K562 (cell line): ENCODE measurements at regions of chr1 and their contacts with region 1.

Region 1: DNA sequence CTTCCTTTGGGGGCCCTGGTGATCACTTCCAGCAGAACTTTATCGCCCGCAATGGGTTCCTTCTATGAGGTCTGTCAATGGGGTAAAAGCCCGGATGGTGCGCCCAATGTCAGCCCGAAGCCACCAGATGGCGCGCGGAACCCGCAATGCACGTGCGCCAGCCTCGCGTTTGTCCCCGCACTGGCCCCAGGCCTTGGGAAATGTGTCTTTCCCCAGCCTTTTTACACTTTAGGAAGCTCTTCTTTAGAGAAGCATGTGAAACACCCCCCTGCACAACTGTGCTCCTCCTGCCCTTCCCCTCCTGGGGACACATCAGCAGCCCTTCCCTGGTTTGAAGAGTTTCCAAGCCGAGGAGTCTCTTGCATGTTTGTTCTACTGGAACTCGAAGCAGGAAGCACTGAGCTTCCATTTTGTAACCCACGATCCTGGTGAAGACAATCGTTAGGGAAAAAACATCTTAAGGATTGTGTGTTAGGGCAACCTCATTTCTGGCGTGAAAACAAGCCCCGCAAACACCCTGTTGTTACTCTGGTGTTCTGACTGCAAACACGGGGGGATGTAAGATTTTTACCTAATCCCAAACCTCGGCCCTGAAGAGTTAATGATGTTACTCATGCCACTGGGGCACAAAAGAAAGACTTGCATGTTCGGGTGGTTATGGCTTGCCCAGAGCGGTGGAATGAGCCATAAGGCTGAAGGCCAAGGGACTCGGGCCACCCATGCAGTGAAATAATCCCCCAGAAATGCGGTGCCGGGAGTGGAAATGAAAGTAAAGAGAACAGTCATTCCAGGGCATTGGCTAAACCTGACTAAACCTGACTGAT is 20.4 kb upstream of the TARBP1 start:
- DNase-seq: peak; percentile 90 to 95 (median 92)
- ATAC-seq: peak; percentile 99
- H3K4me3 ChIP-seq: no peak overlapping the region
- H3K27ac ChIP-seq: peak overlapping the region; percentile 33
- H3K4me1 ChIP-seq: peaks cover 11 to 37% of the 10 kb centered on the region in 2 experiments
- H3K27me3 ChIP-seq: no peaks in the 10 kb centered on the region
- CTCF ChIP-seq: peak; percentile 95 to 99 (median 98)
- EP300 ChIP-seq: peak; percentile 14; the same call in 1 of the 2 replicates
- POLR2A ChIP-seq: no peak
- RAD21 ChIP-seq: peak; percentile 100

Region 2: GRCh38 chr1:234519506-234519905 is 20.2 kb after region 1 on chr1:
- CTCF ChIA-PET with region 1: no interaction called
- POLR2A ChIA-PET with region 1: no interaction called
- in situ Hi-C with region 1: no loop called
- intact Hi-C with region 1: no loop called
- DNase-seq: no peak
- ATAC-seq: no peak
- H3K4me3 ChIP-seq: no peak overlapping the region
- H3K27ac ChIP-seq: no peak overlapping the region
- H3K4me1 ChIP-seq: peaks cover 21 to 34% of the 10 kb centered on the region in 2 experiments
- H3K27me3 ChIP-seq: no peaks in the 10 kb centered on the region
- CTCF ChIP-seq: no peak
- EP300 ChIP-seq: no peak
- POLR2A ChIP-seq: no peak
- RAD21 ChIP-seq: no peak

Region 3: GRCh38 chr1:234592242-234592641 is 92.9 kb after region 1 on chr1:
- CTCF ChIA-PET with region 1: interaction called, 9 read pairs
- POLR2A ChIA-PET with region 1: interaction called, 3 read pairs
- in situ Hi-C with region 1: loop called (anchors 5 kb)
- intact Hi-C with region 1: loop called (anchors 1 kb)
- DNase-seq: peak in 2 of 4 experiments; percentile 47 to 65
- ATAC-seq: peak; percentile 92
- H3K4me3 ChIP-seq: no peak overlapping the region
- H3K27ac ChIP-seq: no peak overlapping the region
- H3K4me1 ChIP-seq: peaks cover 2 to 3% of the 10 kb centered on the region in 2 experiments; a peak in 3 of 5 replicates
- H3K27me3 ChIP-seq: no peaks in the 10 kb centered on the region
- CTCF ChIP-seq: peak; percentile 53 to 69 (median 60); a peak in 5 of 6 replicates
- EP300 ChIP-seq: no peak
- POLR2A ChIP-seq: no peak
- RAD21 ChIP-seq: peak; percentile 86 to 97

Region 4: DNA sequence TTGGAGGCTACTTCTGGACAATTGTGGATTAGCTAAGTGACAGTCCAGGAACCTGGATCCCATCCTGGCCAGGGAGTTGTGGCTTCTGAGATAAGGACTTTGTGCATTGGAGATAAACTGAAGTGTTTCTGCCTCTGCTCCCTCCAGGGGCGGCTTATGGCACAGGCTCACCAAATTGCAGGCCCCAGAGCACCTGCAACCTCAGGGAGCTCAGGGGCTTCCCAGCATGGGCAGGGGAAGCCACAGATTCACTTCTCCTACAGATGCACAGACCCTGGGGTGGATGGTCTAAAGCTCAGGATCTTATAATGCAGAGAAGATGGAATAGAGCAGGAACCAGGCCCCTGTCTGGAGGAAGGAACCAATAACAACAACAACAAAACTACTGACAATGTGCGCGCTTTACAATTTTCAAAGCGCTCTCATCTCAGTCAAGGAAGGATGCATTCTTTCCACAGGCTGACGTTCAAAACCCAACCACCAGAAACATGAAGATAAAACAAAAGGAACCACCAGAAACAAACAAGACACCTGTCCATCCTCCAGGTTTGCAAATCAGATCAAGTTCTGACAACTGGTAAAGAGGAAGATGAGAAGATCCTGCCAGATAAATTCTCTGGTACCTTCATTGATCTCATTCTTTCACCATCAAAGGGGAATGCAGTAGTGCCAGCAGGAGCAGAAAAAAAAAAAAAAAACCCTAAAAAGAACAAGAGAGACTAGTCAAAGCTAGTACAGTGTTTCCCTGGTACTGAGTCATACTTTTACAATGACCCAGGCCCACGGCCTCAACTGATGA is 231.6 kb after region 1 on chr1:
- CTCF ChIA-PET with region 1: interaction called, 3 read pairs
- POLR2A ChIA-PET with region 1: no interaction called
- in situ Hi-C with region 1: loop called (anchors 10 kb)
- intact Hi-C with region 1: loop called (anchors 1 kb)
- DNase-seq: peak; percentile 59 to 84 (median 70)
- ATAC-seq: peak; percentile 83
- H3K4me3 ChIP-seq: no peak overlapping the region
- H3K27ac ChIP-seq: no peak overlapping the region
- H3K4me1 ChIP-seq: peaks cover 43 to 57% of the 10 kb centered on the region in 2 experiments
- H3K27me3 ChIP-seq: no peaks in the 10 kb centered on the region
- CTCF ChIP-seq: peak in 2 of 3 experiments; percentile 61 to 62; a peak in 5 of 6 replicates
- EP300 ChIP-seq: peak; percentile 89
- POLR2A ChIP-seq: no peak
- RAD21 ChIP-seq: peak; percentile 64 to 73

Region 5: GRCh38 chr1:234963180-234963903 is 464.0 kb after region 1 on chr1:
- CTCF ChIA-PET with region 1: no interaction called
- POLR2A ChIA-PET with region 1: no interaction called
- in situ Hi-C with region 1: no loop called
- intact Hi-C with region 1: loop called (anchors 5 kb)
- DNase-seq: peak; percentile 60 to 80 (median 70)
- ATAC-seq: peak; percentile 64
- H3K4me3 ChIP-seq: no peak overlapping the region
- H3K27ac ChIP-seq: peak overlapping the region; percentile 82
- H3K4me1 ChIP-seq: peaks cover 27 to 66% of the 10 kb centered on the region in 2 experiments
- H3K27me3 ChIP-seq: no peaks in the 10 kb centered on the region
- CTCF ChIP-seq: no peak
- EP300 ChIP-seq: peak; percentile 75
- POLR2A ChIP-seq: no peak
- RAD21 ChIP-seq: peak in 1 of 2 experiments; percentile 18; a peak in 2 of 4 replicates

Region 6: DNA sequence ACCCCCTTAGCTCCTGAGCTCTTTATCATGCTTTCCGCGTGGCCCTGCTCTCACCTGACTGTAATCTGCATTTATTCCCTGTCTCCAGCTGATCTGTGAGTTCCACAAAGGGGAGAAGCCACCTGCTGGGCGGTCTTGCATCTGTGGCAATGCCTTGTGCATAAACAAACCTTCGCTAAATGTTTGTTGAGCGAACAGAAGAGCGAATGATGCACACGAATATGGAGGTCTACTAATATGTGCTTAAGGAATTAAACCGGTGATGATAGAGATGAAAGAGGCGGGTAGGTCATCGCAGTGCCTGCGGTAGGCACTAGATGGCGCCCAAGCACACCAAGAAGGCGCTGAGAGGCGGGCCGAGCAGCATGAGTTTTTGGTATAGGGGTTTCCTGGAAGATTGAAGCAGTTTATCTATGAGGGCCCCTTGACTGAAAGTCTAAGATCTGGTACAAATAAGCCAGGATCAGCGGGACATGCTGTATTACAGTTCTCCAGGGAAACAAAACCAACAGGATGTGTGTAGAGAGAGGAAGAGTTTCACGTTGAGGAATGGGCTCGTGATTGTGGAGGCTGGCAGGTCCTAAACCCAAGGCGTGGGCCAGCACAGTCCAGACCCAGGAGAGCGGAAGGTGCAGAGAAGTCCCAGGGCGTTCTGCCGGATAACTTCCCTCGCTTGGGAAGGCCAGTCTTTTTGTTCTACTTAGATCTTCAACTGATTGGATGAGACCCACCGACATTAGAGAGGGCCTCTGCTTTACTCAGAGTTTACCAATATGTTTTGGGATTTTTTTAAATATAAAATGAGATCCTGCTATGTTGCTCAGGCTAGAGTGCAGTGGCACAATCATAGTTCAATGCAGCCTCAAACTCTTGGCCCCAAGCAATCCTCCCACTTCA is 594.6 kb after region 1 on chr1:
- CTCF ChIA-PET with region 1: interaction called, 18 read pairs
- POLR2A ChIA-PET with region 1: no interaction called
- in situ Hi-C with region 1: loop called (anchors 5 kb)
- intact Hi-C with region 1: loop called (anchors 1 kb)
- DNase-seq: peak; percentile 82 to 89 (median 88)
- ATAC-seq: peak; percentile 88
- H3K4me3 ChIP-seq: no peak overlapping the region
- H3K27ac ChIP-seq: no peak overlapping the region; the same call in 2 of the 3 replicates
- H3K4me1 ChIP-seq: peaks cover 14 to 18% of the 10 kb centered on the region in 2 experiments
- H3K27me3 ChIP-seq: no peaks in the 10 kb centered on the region
- CTCF ChIP-seq: peak; percentile 92 to 98 (median 96)
- EP300 ChIP-seq: no peak
- POLR2A ChIP-seq: no peak
- RAD21 ChIP-seq: peak; percentile 84 to 96